Heart left ventricle (tissue), 16 donors: ENCODE measurements at regions of chr1 and their contacts with region 1.

Region 1: DNA sequence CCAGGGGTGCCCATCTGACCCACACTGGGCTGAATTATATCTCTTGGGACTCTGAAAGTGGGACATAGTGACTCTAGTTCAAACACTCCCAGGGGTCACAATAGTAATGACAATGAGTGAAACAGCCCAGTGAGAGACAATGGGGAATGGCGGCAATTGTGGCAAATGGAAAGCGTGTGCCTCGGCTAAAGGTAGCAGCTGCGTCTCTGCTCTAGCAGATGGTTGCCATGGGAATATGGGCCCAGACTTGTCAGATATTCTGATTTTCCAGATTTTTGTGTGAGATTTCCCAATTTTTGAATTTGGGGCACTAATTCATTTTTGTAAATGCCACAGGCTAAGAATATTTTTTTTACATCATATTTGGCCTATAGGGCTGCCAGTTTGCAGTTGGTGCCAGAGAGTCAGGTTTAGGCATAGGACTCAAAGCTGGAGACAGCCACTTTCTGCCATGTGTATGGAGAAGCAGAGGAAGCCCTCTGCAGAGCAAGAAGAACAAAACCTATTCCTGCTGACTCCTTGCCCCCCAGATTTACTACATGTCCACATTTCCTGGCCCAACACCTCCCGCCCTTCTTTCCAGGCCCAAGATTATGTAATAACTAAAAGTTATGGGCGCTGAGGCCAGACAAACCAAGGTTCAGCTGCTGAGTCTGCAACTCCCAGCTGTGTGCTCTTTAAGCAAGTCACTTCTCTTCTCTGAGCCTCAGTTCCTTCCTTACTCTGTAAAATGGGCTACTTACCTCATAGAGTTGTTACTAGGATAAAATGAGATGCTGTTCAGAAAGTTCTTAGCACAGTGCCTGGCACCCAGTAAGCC is 21.6 kb upstream of the PTP4A2 start:
- DNase-seq: no peak
- ATAC-seq: no peak
- H3K4me3 ChIP-seq: no peak overlapping the region
- H3K27ac ChIP-seq: peak overlapping the region in 1 of 12 donors; percentile 70
- H3K4me1 ChIP-seq: peaks cover 10 to 79% (median 20%) of the 10 kb centered on the region in 12 donors
- H3K27me3 ChIP-seq: no peaks in the 10 kb centered on the region
- CTCF ChIP-seq: no peak
- POLR2A ChIP-seq: no peak

Region 2: DNA sequence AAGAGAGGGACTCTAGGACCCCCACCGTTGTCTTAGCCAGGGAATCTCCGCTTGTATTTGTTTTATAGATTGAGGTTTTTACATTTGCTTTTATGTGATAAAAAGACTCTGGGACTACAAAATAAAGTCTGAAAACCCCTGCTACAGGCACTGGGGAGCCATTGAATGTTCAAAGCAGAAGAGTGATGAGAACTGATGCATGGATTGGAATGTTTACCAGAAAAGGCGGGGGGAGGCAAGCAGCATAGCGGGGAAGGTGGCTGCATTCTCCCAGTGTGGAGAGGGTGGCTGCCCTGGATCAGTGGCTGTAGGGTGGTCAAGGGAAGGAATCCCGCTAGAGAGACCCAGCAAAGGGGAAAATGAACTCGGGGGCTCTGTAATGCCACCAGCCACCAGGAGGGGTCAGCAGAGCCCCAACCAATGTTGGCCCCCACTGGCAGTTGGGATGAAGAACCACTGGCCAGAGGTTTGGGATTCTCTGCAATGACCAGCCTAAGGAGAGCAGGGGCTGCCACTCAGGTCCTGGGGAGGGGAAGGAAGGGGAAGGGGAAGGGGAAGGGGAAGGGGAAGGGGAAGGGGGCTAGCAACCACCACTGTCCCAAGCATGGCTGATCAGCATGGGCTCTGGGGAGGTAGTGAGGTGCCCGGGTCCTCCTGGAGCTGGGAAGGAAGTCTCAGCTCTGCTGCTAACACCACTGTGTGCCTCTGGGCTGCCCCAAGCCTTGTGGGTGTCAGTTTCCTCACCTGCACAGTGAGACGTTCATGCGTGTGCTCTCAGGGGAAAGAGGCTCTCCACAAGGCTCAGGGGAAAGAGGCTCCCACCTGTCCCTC is 295.9 kb before region 1 on chr1:
- intact Hi-C with region 1: loop called in 6 of 10 experiments (anchors 5 to 10 kb)
- DNase-seq: peak; percentile 50 to 76 (median 58)
- ATAC-seq: peak; percentile 23 to 55 (median 42)
- H3K4me3 ChIP-seq: no peak overlapping the region
- H3K27ac ChIP-seq: no peak overlapping the region
- H3K4me1 ChIP-seq: peaks cover 0 to 25% (median 10%) of the 10 kb centered on the region in 12 donors
- H3K27me3 ChIP-seq: no peaks in the 10 kb centered on the region
- CTCF ChIP-seq: peak; percentile 85 to 96 (median 88)
- POLR2A ChIP-seq: no peak

Region 3: GRCh38 chr1:31762726-31763670 is 196.7 kb before region 1 on chr1:
- intact Hi-C with region 1: loop called in 1 of 10 experiments (anchors 5 kb)
- DNase-seq: peak; percentile 53 to 77 (median 66)
- ATAC-seq: peak in 3 of 4 donors; percentile 57 to 69 (median 63)
- H3K4me3 ChIP-seq: peak overlapping the region in 11 of 12 donors; percentile 30 to 71 (median 59)
- H3K27ac ChIP-seq: no peak overlapping the region
- H3K4me1 ChIP-seq: peaks cover 2 to 42% (median 29%) of the 10 kb centered on the region in 12 donors
- H3K27me3 ChIP-seq: peaks cover 0 to 46% (median 10%) of the 10 kb centered on the region in 9 donors
- CTCF ChIP-seq: peak; percentile 39 to 71 (median 56)
- POLR2A ChIP-seq: no peak

Region 4: DNA sequence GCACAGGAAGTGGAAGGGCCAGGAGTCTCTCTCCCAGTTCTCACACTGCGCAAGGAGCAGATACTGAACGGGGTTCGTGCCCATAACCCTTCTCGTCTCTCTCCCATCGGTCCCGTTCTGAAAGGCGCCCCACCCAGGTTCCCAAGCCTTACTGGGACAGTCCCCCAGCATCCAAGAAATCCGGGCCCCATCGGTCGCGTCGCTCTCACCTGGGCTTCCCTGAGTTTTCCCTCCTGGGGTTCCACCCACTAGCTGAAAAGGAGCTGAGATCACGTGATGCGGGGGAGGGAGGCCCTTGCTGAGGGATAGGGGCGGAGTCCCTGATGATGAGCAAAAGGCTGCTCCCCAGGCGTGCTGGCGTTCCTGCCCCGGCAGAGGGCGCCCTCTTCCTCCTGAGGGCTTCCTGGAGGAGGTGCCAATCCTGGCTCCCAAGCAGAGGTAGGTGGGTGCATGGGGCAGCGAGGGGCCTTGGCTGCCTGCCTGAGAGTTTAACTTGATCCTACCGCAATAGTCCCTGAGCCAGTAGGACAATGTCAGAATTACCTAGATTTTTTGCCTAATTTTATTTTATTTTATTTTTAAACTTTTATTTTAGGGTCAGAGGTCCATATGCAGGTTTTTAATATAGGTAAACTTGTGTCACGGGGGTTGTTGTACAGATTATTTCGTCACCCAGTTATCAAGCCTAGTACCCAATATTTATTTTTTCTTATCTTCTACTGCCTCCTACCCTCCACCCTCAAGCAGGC is 143.8 kb before region 1 on chr1 and contains the start of gene SPOCD1:
- intact Hi-C with region 1: loop called in 5 of 10 experiments (anchors 5 to 10 kb)
- DNase-seq: peak; percentile 42 to 86 (median 63)
- ATAC-seq: peak; percentile 51 to 89 (median 74)
- H3K4me3 ChIP-seq: no peak within 1 kb of the TSS
- H3K27ac ChIP-seq: no peak within 1 kb of the TSS
- H3K4me1 ChIP-seq: peaks cover 0 to 4% (median 0%) of the 10 kb centered on the region in 12 donors
- H3K27me3 ChIP-seq: no peaks in the 10 kb centered on the region
- CTCF ChIP-seq: peak; percentile 26 to 68 (median 46)
- POLR2A ChIP-seq: no peak
- total RNA-seq, gene SPOCD1: 0.19 to 2.9 (median 0.46) TPM in 5 of 9 donors, not detected in the others

Region 5: DNA sequence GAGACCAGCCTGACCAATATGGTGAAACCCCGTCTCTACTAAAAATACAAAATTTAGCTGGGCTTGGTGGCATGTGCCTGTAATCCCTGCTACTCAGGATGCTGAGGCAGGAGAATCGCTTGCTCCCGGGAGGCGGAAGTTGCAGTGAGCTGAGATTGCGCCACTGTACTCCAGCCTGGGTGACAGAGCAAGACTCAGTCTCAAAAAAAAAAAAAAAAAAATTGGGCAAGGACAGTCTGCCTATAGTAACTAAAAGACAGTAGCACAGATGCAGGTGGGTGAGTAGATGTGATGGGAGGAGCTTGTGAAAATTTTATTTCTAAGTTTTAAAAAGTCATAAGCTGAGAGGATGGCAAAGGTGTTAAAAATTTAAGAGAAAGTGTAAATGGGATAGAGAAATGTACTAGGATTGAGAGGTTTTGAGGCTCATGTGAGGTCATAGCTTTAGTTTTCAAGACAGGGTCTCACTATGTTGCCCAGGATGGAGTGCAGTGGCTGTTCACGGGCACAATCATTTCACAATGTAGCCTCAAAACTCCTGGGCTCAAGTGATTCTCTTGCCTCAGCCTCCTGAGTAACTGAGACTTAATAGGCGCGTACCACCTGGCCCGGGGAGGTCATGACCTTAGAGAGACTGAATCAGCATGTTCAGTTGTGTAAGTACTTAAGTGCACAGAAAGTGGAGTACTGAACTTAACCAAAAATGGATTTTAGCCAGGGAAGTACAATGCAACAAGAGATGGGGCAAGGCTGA is 55.2 kb before region 1 on chr1:
- intact Hi-C with region 1: loop called in 1 of 10 experiments (anchors 10 kb)
- DNase-seq: peak in 3 of 5 donors; percentile 32 to 72 (median 53)
- ATAC-seq: peak; percentile 24 to 54 (median 24)
- H3K4me3 ChIP-seq: no peak overlapping the region
- H3K27ac ChIP-seq: peak overlapping the region in 1 of 12 donors; percentile 57
- H3K4me1 ChIP-seq: peaks cover 0 to 35% (median 0%) of the 10 kb centered on the region in 12 donors
- H3K27me3 ChIP-seq: no peaks in the 10 kb centered on the region
- CTCF ChIP-seq: no peak
- POLR2A ChIP-seq: no peak

Region 6: GRCh38 chr1:31938174-31938950 is 21.4 kb before region 1 on chr1 and contains the start of gene PTP4A2:
- intact Hi-C with region 1: loop called in 1 of 10 experiments (anchors 2 kb)
- DNase-seq: peak; percentile 95 to 97 (median 97)
- ATAC-seq: peak; percentile 93 to 96 (median 94)
- H3K4me3 ChIP-seq: peak within 1 kb of the TSS; percentile 19 to 92 (median 72)
- H3K27ac ChIP-seq: peak within 1 kb of the TSS; percentile 68 to 100 (median 94)
- H3K4me1 ChIP-seq: peaks cover 6 to 83% (median 42%) of the 10 kb centered on the region in 12 donors
- H3K27me3 ChIP-seq: no peaks in the 10 kb centered on the region
- CTCF ChIP-seq: peak in 10 of 12 donors; percentile 32 to 85 (median 58)
- POLR2A ChIP-seq: peak in 1 of 2 donors; percentile 85
- total RNA-seq, gene PTP4A2: 217 to 354 (median 242) TPM

Region 7: DNA sequence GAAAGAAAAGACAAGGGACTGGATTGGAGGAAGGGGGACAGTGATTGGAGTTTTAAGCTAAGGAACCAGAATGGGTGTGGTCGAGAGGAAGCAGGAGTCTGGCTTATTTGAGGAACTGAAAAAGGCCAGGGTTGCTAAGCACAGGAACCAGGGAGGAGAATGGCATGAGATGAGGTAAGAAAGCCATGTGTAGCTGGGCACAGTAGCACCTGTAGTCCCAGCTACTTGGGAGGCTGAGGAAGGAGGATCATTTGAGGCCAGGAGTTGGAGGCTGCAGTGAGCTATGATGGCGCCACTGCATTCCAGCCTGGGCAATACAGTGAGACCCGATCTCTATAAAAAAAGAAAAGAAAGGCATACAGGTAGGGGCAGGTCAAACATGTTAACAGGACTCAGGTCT is 45.8 kb after region 1 on chr1:
- intact Hi-C with region 1: no loop called
- DNase-seq: no peak
- ATAC-seq: no peak
- H3K4me3 ChIP-seq: no peak overlapping the region
- H3K27ac ChIP-seq: no peak overlapping the region
- H3K4me1 ChIP-seq: peaks cover 0 to 39% (median 0%) of the 10 kb centered on the region in 12 donors
- H3K27me3 ChIP-seq: no peaks in the 10 kb centered on the region
- CTCF ChIP-seq: no peak
- POLR2A ChIP-seq: no peak

Region 8: DNA sequence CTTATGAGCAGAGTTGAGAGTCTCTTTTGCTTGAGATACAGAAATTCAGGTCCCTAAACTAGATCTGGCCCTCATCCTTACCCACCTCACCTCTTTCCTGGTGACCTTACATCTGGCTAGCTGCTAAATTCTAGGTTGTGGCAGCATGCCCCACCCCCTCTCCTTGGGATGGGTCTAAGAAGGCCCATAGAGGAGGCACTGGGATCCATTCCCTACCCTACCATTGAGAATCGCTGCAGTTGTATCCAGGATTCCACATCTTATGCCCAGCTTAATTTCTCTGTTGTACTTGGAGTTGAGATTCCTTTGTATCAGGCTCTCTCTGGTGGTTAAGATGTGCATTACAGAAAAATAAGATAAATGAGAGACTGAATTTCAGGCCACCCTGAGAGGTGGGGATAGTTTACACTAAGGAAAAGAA is 103.5 kb after region 1 on chr1:
- intact Hi-C with region 1: loop called in 1 of 10 experiments (anchors 5 kb)
- DNase-seq: no peak
- ATAC-seq: peak; percentile 22 to 67 (median 40)
- H3K4me3 ChIP-seq: no peak overlapping the region
- H3K27ac ChIP-seq: peak overlapping the region in 7 of 12 donors; percentile 3 to 54 (median 44)
- H3K4me1 ChIP-seq: peaks cover 0 to 28% (median 23%) of the 10 kb centered on the region in 12 donors
- H3K27me3 ChIP-seq: no peaks in the 10 kb centered on the region
- CTCF ChIP-seq: peak; percentile 37 to 69 (median 58)
- POLR2A ChIP-seq: no peak

Region 9: GRCh38 chr1:32215629-32216480 is 256.1 kb after region 1 on chr1:
- intact Hi-C with region 1: no loop called
- DNase-seq: peak in 4 of 5 donors; percentile 46 to 54 (median 52)
- ATAC-seq: peak; percentile 28 to 84 (median 80)
- H3K4me3 ChIP-seq: no peak overlapping the region
- H3K27ac ChIP-seq: peak overlapping the region in 6 of 12 donors; percentile 0 to 52 (median 16)
- H3K4me1 ChIP-seq: peaks cover 0 to 20% (median 2%) of the 10 kb centered on the region in 12 donors
- H3K27me3 ChIP-seq: no peaks in the 10 kb centered on the region
- CTCF ChIP-seq: peak; percentile 64 to 83 (median 75)
- POLR2A ChIP-seq: no peak

Region 10: DNA sequence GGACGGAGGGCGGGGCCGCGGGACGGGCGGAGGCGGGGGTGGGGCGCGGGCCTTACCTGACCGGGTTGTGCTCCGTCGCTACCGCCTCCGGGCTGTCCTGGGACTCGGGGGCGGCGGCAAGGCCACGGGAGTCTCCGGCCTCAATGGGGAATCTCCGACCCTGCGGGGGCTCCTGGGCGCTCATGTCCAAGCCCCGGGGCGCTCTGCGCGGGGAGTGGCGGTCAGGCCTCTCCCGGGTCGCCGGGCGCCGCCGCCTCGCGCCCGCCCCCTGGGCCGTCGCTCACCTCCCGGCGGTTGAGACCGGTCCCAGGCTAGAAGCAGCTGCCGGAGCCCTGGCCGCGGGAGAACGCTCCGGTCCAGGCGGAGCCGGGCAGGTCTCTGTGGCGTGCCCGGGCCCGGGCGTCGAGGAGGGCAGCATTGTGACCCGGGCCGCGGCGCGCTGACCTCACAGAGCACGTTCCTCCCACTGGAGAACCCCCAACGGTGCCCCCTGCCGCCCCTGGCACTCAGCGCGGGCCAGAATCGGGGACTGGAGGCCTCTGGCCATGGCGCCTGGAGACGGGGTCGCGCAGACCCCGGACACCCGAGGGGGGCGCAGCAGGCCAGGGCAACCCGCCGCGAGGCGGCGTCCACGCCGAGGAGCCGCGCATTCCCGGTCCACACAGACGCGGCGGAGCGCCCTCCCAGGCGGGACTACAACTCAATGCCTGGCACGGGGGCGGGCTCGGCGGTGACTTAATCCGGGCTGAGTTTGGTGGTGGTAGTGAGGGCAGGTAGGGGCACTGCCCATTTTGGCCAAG is 402.1 kb after region 1 on chr1:
- intact Hi-C with region 1: no loop called
- DNase-seq: peak; percentile 62 to 79 (median 66)
- ATAC-seq: peak; percentile 27 to 75 (median 74)
- H3K4me3 ChIP-seq: peak overlapping the region; percentile 10 to 58 (median 48)
- H3K27ac ChIP-seq: peak overlapping the region in 7 of 12 donors; percentile 9 to 63 (median 30)
- H3K4me1 ChIP-seq: peaks cover 3 to 29% (median 15%) of the 10 kb centered on the region in 12 donors
- H3K27me3 ChIP-seq: no peaks in the 10 kb centered on the region
- CTCF ChIP-seq: peak; percentile 14 to 74 (median 44)
- POLR2A ChIP-seq: no peak